ENCODE measurements at regions of chr10 and their contacts with region 1.

Region 1: GRCh38 chr10:21724695-21725367 is 190.8 kb downstream of the MLLT10 start:
- DNase-seq: peak; percentile 87
- H3K4me3 ChIP-seq: no peak overlapping the region
- H3K27ac ChIP-seq: no peak overlapping the region
- H3K4me1 ChIP-seq: peaks cover 14% of the 10 kb centered on the region
- H3K27me3 ChIP-seq: no peaks in the 10 kb centered on the region
- CTCF ChIP-seq: no peak

Region 2: GRCh38 chr10:21702633-21703111 is 22.2 kb before region 1 on chr10:
- CTCF ChIA-PET with region 1: interaction called, 10 read pairs
- POLR2A ChIA-PET with region 1: no interaction called
- intact Hi-C with region 1: no loop called
- DNase-seq: no peak
- H3K4me3 ChIP-seq: no peak overlapping the region
- H3K27ac ChIP-seq: no peak overlapping the region
- H3K4me1 ChIP-seq: no peaks in the 10 kb centered on the region
- H3K27me3 ChIP-seq: no peaks in the 10 kb centered on the region
- CTCF ChIP-seq: no peak

Region 3: DNA sequence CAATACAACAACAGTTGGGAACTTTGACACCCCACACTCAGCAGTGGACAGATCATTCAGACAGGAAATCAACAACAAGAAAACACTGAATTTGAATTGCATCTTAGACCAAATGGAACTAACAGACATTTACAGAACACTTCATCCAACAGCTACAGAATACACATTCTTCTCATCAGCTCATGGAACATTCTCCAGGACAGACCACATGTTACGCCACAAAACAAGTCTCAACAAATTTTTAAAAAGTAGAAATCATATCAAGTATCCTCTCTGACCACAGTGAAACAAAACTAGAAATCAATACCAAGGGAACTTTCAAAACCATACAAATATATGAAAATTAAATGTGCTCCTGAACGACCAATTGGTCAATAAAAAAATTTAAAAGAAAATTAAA is 66.4 kb after region 1 on chr10:
- CTCF ChIA-PET with region 1: no interaction called
- POLR2A ChIA-PET with region 1: no interaction called
- intact Hi-C with region 1: no loop called
- DNase-seq: no peak
- H3K4me3 ChIP-seq: no peak overlapping the region
- H3K27ac ChIP-seq: no peak overlapping the region
- H3K4me1 ChIP-seq: no peaks in the 10 kb centered on the region
- H3K27me3 ChIP-seq: no peaks in the 10 kb centered on the region
- CTCF ChIP-seq: no peak

Region 4: GRCh38 chr10:21926949-21927348 is 202.1 kb after region 1 on chr10:
- CTCF ChIA-PET with region 1: no interaction called
- POLR2A ChIA-PET with region 1: interaction called, 11 read pairs
- intact Hi-C with region 1: no loop called
- DNase-seq: peak; percentile 40 to 85
- H3K4me3 ChIP-seq: no peak overlapping the region
- H3K27ac ChIP-seq: peak overlapping the region; percentile 82
- H3K4me1 ChIP-seq: peaks cover 27% of the 10 kb centered on the region
- H3K27me3 ChIP-seq: no peaks in the 10 kb centered on the region
- CTCF ChIP-seq: no peak

Region 5: DNA sequence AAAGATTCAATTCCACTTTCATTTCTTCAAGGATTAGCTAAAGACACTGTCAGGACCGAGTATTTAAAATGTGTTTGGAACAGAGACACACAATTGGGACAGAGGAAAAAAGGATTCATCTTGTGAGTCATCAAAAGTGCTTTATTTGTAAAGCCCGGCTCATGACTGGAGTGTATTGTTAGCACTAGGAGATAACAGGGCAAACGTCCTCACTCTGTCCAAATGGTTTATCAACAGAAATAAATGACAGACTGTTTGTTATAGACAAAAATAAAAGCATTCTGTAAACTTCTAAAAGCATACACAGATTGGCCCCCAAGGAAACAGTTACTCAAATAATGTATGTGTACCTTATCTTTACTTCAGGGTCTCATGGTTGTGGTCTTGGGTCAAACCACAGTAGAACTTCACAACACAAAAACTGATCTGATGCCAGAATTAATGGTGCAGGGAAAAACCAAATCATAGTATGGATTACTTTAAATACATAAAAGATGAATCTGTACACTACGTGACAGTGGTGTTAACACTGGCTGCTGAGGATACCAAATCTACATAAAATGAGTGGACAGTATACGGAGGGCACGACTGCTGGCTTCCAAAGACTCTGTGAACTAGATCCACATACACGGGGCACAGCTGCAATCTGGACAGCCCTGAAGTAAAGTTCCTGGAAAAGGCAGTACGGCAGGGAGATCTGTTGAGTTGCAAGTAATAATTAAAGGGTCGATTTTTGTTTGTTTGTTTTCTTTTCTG is 810.2 kb after region 1 on chr10:
- CTCF ChIA-PET with region 1: no interaction called
- POLR2A ChIA-PET with region 1: interaction called, 14 read pairs
- intact Hi-C with region 1: no loop called
- DNase-seq: no peak
- H3K4me3 ChIP-seq: no peak overlapping the region
- H3K27ac ChIP-seq: no peak overlapping the region
- H3K4me1 ChIP-seq: no peaks in the 10 kb centered on the region
- H3K27me3 ChIP-seq: no peaks in the 10 kb centered on the region
- CTCF ChIP-seq: no peak

Region 6: GRCh38 chr10:22573820-22574569 is 849.2 kb after region 1 on chr10:
- CTCF ChIA-PET with region 1: interaction called, 13 read pairs
- POLR2A ChIA-PET with region 1: no interaction called
- intact Hi-C with region 1: no loop called
- DNase-seq: no peak
- H3K4me3 ChIP-seq: no peak overlapping the region
- H3K27ac ChIP-seq: no peak overlapping the region
- H3K4me1 ChIP-seq: no peaks in the 10 kb centered on the region
- H3K27me3 ChIP-seq: no peaks in the 10 kb centered on the region
- CTCF ChIP-seq: peak; percentile 59

Measured in PC-9 (cell line).